Aorta (tissue), 5 donors: ENCODE measurements at regions of chr7 and their contacts with region 1.

Region 1: DNA sequence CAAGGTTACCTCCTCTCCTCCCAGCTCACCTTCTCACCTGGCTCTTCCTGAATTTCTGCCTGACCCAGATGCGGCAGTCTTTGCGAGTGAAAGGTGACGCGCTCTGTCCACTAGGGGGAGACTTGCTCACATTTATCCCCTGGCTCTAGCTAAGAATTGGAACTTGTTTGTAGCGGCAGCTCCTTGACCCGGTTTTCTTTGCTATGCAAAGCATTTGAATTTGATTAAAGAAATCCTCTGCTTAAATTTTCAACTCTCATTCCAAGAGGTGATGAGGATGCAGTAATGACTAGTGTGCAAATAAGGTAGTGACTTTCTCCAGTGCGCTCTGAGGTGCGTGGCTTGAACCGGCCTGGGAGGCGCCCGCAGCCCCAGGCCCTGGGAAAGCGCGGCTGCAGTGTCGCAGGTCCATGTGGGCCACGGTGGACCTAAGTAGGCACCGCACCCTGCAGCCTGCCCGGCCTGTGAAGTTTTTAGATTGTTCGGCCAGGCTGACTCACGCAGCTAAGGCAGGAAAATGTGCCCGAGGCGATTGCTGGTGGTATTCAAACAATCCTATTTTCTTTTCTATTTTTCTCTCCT is 336.9 kb upstream of the NPSR1 start:
- DNase-seq: peak; percentile 50 to 73
- ATAC-seq: peak; percentile 75
- H3K4me3 ChIP-seq: peak overlapping the region in 1 of 2 donors; percentile 5
- H3K27ac ChIP-seq: no peak overlapping the region
- H3K4me1 ChIP-seq: no peaks in the 10 kb centered on the region
- H3K27me3 ChIP-seq: no peaks in the 10 kb centered on the region

Region 2: GRCh38 chr7:33904681-33905388 is 416.3 kb before region 1 on chr7:
- intact Hi-C with region 1: no loop called
- DNase-seq: peak in 1 of 2 donors; percentile 83
- ATAC-seq: peak; percentile 83
- H3K4me3 ChIP-seq: peak overlapping the region; percentile 27 to 47
- H3K27ac ChIP-seq: no peak overlapping the region
- H3K4me1 ChIP-seq: peaks cover 0 to 3% of the 10 kb centered on the region in 2 donors
- H3K27me3 ChIP-seq: no peaks in the 10 kb centered on the region

Region 3: DNA sequence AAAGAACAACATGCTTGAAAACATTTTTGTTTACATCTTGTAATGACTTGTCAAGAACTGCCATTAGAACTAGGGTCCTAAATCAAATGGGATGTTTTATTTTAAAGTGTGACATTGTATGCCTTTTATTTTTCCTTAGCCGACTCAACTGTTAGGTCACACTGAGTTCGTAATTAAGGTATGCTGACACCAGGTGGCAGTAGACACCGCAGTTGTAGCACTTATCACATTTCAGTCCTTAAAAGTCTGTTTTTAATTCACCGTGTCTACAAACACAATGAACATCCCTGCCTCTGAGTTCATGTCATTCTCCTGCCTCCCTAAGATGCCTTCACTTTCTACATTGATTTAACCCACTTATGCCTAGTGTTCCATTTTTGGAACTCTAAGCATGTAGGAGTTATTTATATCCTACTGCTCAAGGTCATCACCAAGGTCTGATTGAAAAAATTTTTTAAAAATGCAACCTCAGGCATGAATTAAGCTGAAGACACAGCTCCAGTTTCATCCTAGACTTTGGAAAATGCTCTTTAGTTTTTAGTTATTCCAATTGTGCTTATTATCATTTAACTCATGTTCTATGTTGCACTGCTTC is 229.7 kb before region 1 on chr7:
- intact Hi-C with region 1: no loop called
- DNase-seq: no peak
- ATAC-seq: no peak
- H3K4me3 ChIP-seq: no peak overlapping the region
- H3K27ac ChIP-seq: no peak overlapping the region
- H3K4me1 ChIP-seq: peaks cover 0 to 2% of the 10 kb centered on the region in 2 donors
- H3K27me3 ChIP-seq: no peaks in the 10 kb centered on the region

Region 4: GRCh38 chr7:34425187-34425586 is 104.1 kb after region 1 on chr7:
- intact Hi-C with region 1: loop called (anchors 2 to 10 kb)
- DNase-seq: no peak
- ATAC-seq: no peak
- H3K4me3 ChIP-seq: no peak overlapping the region
- H3K27ac ChIP-seq: no peak overlapping the region
- H3K4me1 ChIP-seq: no peaks in the 10 kb centered on the region
- H3K27me3 ChIP-seq: no peaks in the 10 kb centered on the region

Region 5: GRCh38 chr7:34430458-34430857 is 109.4 kb after region 1 on chr7:
- intact Hi-C with region 1: loop called (anchors 2 to 10 kb)
- DNase-seq: no peak
- ATAC-seq: no peak
- H3K4me3 ChIP-seq: no peak overlapping the region
- H3K27ac ChIP-seq: no peak overlapping the region
- H3K4me1 ChIP-seq: no peaks in the 10 kb centered on the region
- H3K27me3 ChIP-seq: no peaks in the 10 kb centered on the region

Region 6: DNA sequence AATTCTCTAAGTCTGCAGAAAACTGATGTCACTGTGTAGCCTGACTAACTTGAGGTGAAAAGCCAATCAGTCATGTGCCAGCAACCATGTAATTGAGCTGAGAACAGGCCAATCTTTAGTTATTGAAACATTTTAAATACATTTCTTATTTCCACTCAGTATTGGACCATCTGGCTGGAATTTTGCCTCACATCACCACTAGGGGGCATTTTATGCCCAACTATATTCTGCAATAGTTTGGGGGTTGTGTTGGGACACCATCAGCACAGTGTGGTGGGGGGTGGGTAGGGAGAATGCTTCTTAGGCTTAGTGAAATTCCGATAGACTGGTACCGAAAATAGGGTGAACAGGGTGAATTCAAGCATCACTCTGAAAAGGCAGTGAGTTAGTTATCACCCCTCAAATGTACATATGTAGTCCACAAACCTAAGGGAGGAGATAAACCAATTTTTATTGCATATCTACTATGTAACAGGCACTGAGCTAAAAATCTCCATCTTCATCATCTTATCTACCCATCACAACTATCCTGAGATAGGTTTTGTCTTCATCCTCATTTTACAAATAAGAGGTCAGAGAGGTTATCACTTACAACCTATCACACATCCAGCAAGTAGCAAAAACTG is 354.8 kb after region 1 on chr7:
- intact Hi-C with region 1: no loop called
- DNase-seq: no peak
- ATAC-seq: no peak
- H3K4me3 ChIP-seq: no peak overlapping the region
- H3K27ac ChIP-seq: no peak overlapping the region
- H3K4me1 ChIP-seq: no peaks in the 10 kb centered on the region
- H3K27me3 ChIP-seq: no peaks in the 10 kb centered on the region